ENCODE measurements at regions of chr9 and their contacts with region 1.

Region 1: GRCh38 chr9:105251733-105252404 is 7.4 kb downstream of the SLC44A1 start:
- DNase-seq: no peak
- ATAC-seq: peak; percentile 53
- H3K4me3 ChIP-seq: no peak overlapping the region
- H3K4me1 ChIP-seq: peaks cover 35% of the 10 kb centered on the region
- CTCF ChIP-seq: no peak

Region 2: GRCh38 chr9:105141146-105141975 is 110.5 kb before region 1 on chr9:
- intact Hi-C with region 1: no loop called
- DNase-seq: peak in 1 of 3 donors; percentile 21
- ATAC-seq: peak; percentile 42
- H3K4me3 ChIP-seq: no peak overlapping the region
- H3K4me1 ChIP-seq: no peaks in the 10 kb centered on the region
- CTCF ChIP-seq: no peak

Region 3: DNA sequence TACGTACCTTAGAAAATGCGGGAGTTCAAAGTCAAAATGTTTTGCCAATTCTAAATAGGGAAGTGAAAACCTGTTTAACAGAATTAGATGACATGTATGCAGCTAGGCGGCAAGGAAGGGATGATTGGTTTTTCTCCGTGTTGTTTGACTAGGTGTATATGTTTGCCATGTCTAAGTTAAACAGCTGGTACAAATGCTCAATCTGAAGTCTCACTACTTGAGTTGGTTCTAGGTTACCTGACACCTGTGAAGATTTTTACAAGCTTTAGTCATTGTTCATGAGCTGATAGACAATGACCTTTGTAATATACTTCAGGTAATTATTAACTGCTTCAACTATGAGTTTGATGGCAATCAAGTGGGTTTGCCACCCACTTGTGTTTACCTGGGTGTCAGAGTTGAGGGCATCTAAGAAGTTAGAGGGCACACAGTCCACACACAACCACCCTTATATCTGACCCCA is 66.9 kb after region 1 on chr9:
- intact Hi-C with region 1: loop called in 1 of 2 experiments (anchors 2 kb)
- DNase-seq: peak in 1 of 3 donors; percentile 54
- ATAC-seq: peak; percentile 92
- H3K4me3 ChIP-seq: no peak overlapping the region
- H3K4me1 ChIP-seq: peaks cover 38% of the 10 kb centered on the region
- CTCF ChIP-seq: no peak

Region 4: GRCh38 chr9:105405514-105406131 is 153.8 kb after region 1 on chr9:
- intact Hi-C with region 1: no loop called
- DNase-seq: no peak
- ATAC-seq: peak; percentile 56
- H3K4me3 ChIP-seq: no peak overlapping the region
- H3K4me1 ChIP-seq: no peaks in the 10 kb centered on the region
- CTCF ChIP-seq: no peak